ENCODE measurements at regions of chrX and their contacts with region 1.

Region 1: GRCh38 chrX:49155900-49156837 is 6.4 kb upstream of the MAGIX start:
- DNase-seq: peak; percentile 81
- H3K4me3 ChIP-seq: peak overlapping the region; percentile 14 to 59 (median 48)
- H3K27ac ChIP-seq: peak overlapping the region; percentile 96
- H3K4me1 ChIP-seq: peaks cover 2% of the 10 kb centered on the region
- H3K27me3 ChIP-seq: no peaks in the 10 kb centered on the region
- CTCF ChIP-seq: peak; percentile 53 to 75
- POLR2A ChIP-seq: no peak

Region 2: DNA sequence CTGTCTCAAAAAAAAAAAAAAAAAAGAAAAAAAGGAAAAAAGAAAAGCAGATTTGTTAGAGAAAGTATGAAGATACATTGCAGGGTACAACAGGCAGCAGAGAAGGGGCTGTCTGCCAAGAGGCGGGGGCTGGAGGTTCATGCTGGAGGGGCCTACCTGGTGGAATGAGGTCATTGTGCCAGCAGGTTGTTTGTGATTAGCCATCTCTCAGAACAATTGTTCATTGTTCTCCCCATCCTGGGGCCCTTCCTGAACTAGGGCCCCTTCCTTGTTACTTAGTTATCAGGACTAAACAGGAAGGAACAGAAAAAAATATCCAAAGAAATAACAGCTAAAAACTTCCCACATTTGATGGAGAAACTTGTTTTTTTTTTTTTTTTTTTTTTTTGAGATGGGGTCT is 18.7 kb before region 1 on chrX:
- CTCF ChIA-PET with region 1: interaction called, 31 read pairs
- POLR2A ChIA-PET with region 1: interaction called, 5 read pairs
- dilution Hi-C with region 1: no loop called
- intact Hi-C with region 1: loop called (anchors 2 kb)
- DNase-seq: peak; percentile 57
- H3K4me3 ChIP-seq: no peak overlapping the region
- H3K27ac ChIP-seq: peak overlapping the region; percentile 65
- H3K4me1 ChIP-seq: peaks cover 7% of the 10 kb centered on the region
- H3K27me3 ChIP-seq: no peaks in the 10 kb centered on the region
- CTCF ChIP-seq: no peak
- POLR2A ChIP-seq: no peak